Right ventricle myocardium superior (tissue), 1 donor: ENCODE measurements at regions of chr1 and their contacts with region 1.

Region 1: DNA sequence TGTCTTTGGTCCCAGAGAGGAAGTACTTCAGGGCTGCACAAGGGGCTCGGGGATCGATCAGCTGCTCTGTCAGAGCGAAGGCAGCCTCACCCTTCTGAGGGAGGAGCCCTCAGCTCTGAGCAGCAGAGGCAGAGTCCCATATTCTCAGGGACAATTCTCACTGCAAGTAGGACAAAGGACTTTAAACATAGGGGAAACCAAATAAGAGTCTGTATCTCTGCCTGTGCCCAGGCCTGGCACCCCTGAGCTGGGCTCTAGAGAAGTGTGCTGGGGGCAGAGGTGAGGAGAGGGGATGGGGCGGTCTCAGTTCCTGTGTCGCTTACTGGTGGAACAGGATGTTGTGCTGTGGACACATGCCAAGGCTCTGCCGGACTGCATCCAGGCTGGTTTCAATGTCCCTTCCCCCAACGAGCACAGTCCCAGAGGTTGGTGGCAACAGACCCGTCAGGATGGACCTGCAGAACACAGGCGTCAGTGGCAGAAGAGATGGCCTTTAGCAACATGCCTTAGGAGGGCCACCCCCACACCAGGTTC is 76.6 kb downstream of the ABCA4 start:
- DNase-seq: peak; percentile 78
- ATAC-seq: peak; percentile 19

Region 2: DNA sequence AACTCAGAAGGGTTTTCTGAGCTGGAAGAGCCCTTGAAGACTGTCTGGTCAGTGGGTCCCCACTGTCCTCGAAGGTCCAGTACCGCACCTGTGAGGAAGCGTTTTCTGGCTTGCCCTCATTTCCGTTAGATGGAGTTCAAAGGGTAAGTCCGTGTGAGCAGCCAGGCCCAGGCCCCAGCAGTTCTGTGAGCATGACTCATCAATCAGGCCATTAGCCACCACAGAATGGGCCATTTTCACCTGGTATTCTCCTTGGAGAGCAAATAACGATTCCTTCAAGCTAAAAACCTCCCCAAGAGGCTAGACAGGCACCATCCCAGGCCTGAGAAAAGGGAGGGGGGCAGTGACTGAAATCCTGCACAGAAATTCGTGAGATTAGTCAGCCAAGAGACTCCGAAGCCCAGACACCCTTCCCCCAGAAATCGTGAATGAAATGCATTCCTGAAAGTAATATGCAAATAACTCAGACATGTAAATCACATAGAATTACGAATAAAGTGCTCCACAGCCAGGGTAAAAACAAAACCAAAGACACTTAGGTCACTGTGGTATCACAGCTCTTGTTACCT is 428.7 kb before region 1 on chr1:
- intact Hi-C with region 1: no loop called
- DNase-seq: no peak
- ATAC-seq: no peak

Region 3: DNA sequence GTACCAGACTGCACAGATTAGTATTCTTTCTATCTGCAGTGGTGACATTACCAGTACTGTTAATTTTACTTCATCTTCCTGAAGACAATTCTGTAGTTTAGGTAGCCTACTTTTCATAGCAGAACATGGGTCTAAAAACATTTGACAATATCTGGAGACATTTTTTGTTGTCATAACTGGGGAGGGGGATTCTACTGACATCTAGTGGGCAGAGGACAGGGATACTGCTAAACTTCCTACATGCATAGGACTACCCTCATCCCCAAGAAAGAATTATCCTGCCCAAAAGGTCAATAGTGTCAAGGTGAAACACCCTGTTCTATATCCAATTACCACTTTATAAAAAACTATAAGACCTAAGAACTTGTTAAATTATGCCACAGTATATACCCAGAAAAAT is 196.5 kb after region 1 on chr1:
- intact Hi-C with region 1: loop called (anchors 5 kb)
- DNase-seq: no peak
- ATAC-seq: no peak